MCF 10A (cell line): ENCODE measurements at regions of chr6 and their contacts with region 1.

Region 1: GRCh38 chr6:46491628-46492547 is 639 bp upstream of the RCAN2 start:
- DNase-seq: peak; percentile 37
- H3K4me3 Mint-ChIP-seq: peak overlapping the region; percentile 68
- H3K27ac Mint-ChIP-seq: no peak overlapping the region
- H3K4me1 Mint-ChIP-seq: peaks cover 11% of the 10 kb centered on the region
- H3K27me3 Mint-ChIP-seq: peaks cover 97% of the 10 kb centered on the region
- CTCF ChIP-seq: peak; percentile 10

Region 2: DNA sequence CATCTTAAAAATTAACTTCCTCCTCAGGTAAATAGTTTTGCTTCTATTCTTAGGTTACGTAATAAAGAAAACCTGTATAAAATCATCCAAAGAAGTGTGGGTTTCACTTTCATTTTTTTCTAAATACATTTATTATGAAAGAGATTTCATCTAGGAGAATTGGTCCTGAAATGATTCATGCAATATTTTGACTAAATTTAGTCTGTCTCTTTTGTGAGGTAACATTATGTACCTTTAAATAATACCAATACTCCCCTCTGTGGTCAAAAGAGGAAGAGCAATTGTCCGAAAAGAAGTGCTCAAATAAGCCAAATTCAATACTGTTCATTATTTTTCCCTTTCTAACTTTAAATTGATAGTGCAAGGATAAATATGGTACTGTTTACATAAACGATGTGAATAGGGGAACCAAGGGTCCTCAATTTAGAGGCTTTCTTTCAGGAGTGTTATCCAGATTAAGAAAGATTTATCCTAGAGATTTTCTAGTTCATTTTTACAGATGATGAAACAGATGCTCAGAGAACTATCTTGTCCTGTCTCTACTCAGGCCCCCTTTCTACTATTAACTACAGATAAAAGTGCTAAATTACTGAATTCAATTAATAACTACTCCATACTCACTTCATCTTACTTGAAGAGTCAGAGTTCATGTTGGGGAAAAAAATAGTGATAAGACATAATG is 134.5 kb after region 1 on chr6:
- CTCF ChIA-PET with region 1: no interaction called
- POLR2A ChIA-PET with region 1: no interaction called
- intact Hi-C with region 1: loop called (anchors 5 kb)
- DNase-seq: peak; percentile 62
- H3K4me3 Mint-ChIP-seq: no peak overlapping the region
- H3K27ac Mint-ChIP-seq: no peak overlapping the region
- H3K4me1 Mint-ChIP-seq: no peaks in the 10 kb centered on the region
- H3K27me3 Mint-ChIP-seq: no peaks in the 10 kb centered on the region
- CTCF ChIP-seq: peak; percentile 55